ENCODE measurements at regions of chr2 and their contacts with region 1.

Region 1: GRCh38 chr2:39194686-39195085 is 49.1 kb downstream of the CDKL4 start:
- DNase-seq: no peak
- ATAC-seq: no peak
- H3K4me3 ChIP-seq: no peak overlapping the region
- H3K27ac ChIP-seq: no peak overlapping the region
- H3K4me1 ChIP-seq: no peaks in the 10 kb centered on the region
- H3K27me3 ChIP-seq: no peaks in the 10 kb centered on the region
- CTCF ChIP-seq: no peak

Region 2: DNA sequence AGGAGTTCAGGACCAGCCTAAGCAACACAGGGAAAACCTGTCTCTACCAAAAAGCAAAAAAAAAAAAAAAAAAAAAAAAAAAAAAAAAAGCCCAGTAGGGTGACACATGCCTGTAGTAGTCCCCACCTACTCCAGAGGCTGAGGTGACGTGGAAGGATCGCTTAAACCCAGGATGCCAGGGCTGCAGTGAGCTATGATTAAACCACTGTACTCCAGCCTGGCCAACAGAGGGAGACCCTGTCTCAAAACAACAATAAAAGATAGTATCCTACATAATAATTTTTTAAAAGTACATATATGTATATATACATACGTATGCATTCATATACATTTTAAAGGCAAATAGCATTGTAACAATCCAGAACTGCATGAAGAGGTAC is 125.6 kb before region 1 on chr2:
- CTCF ChIA-PET with region 1: interaction called, 14 read pairs
- POLR2A ChIA-PET with region 1: no interaction called
- in situ Hi-C with region 1: no loop called
- intact Hi-C with region 1: no loop called
- DNase-seq: no peak
- ATAC-seq: no peak
- H3K4me3 ChIP-seq: no peak overlapping the region
- H3K27ac ChIP-seq: no peak overlapping the region
- H3K4me1 ChIP-seq: no peaks in the 10 kb centered on the region
- H3K27me3 ChIP-seq: no peaks in the 10 kb centered on the region
- CTCF ChIP-seq: no peak